ENCODE measurements at regions of chr4 and their contacts with region 1.

Region 1: GRCh38 chr4:86122404-86122803 is 237.4 kb downstream of the MAPK10 start:
- DNase-seq: no peak
- H3K4me3 ChIP-seq: no peak overlapping the region
- H3K4me3 Mint-ChIP-seq: no peak overlapping the region
- H3K27ac ChIP-seq: no peak overlapping the region
- H3K27ac Mint-ChIP-seq: no peak overlapping the region
- H3K4me1 ChIP-seq: no peaks in the 10 kb centered on the region
- H3K4me1 Mint-ChIP-seq: no peaks in the 10 kb centered on the region
- H3K27me3 ChIP-seq: no peaks in the 10 kb centered on the region
- H3K27me3 Mint-ChIP-seq: no peaks in the 10 kb centered on the region

Region 2: DNA sequence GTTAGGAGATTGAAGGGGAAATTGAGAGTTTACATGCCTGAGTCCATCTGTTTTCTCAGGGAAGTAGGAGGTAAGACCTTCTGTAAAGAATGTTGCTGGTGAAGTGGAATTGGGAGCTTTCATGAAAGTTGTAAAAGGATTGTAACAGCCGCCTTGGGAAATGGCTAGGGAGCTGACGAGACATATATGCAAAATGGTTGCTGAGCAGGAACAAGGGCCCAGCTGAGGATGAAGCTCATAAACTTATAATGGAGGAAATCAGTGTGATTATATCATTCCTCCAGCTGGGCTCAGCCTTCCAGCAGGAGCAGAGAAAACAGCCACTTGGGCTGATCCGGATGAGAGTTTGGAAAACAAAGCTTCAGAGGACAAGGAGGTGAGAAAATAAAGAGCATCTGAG is 28.8 kb after region 1 on chr4:
- CTCF ChIA-PET with region 1: no interaction called
- POLR2A ChIA-PET with region 1: no interaction called
- intact Hi-C with region 1: no loop called
- DNase-seq: no peak
- H3K4me3 ChIP-seq: no peak overlapping the region
- H3K4me3 Mint-ChIP-seq: no peak overlapping the region
- H3K27ac ChIP-seq: no peak overlapping the region
- H3K27ac Mint-ChIP-seq: no peak overlapping the region
- H3K4me1 ChIP-seq: no peaks in the 10 kb centered on the region
- H3K4me1 Mint-ChIP-seq: no peaks in the 10 kb centered on the region
- H3K27me3 ChIP-seq: no peaks in the 10 kb centered on the region
- H3K27me3 Mint-ChIP-seq: no peaks in the 10 kb centered on the region

Region 3: GRCh38 chr4:86181585-86181984 is 59.2 kb after region 1 on chr4:
- CTCF ChIA-PET with region 1: no interaction called
- POLR2A ChIA-PET with region 1: no interaction called
- intact Hi-C with region 1: loop called (anchors 10 kb)
- DNase-seq: no peak
- H3K4me3 ChIP-seq: no peak overlapping the region
- H3K4me3 Mint-ChIP-seq: no peak overlapping the region
- H3K27ac ChIP-seq: no peak overlapping the region
- H3K27ac Mint-ChIP-seq: no peak overlapping the region
- H3K4me1 ChIP-seq: no peaks in the 10 kb centered on the region
- H3K4me1 Mint-ChIP-seq: no peaks in the 10 kb centered on the region
- H3K27me3 ChIP-seq: no peaks in the 10 kb centered on the region
- H3K27me3 Mint-ChIP-seq: no peaks in the 10 kb centered on the region

Measured in CD4-positive, alpha-beta memory T cell (primary cell).